GM13976 (cell line): ENCODE measurements at regions of chr3 and their contacts with region 1.

Region 1: DNA sequence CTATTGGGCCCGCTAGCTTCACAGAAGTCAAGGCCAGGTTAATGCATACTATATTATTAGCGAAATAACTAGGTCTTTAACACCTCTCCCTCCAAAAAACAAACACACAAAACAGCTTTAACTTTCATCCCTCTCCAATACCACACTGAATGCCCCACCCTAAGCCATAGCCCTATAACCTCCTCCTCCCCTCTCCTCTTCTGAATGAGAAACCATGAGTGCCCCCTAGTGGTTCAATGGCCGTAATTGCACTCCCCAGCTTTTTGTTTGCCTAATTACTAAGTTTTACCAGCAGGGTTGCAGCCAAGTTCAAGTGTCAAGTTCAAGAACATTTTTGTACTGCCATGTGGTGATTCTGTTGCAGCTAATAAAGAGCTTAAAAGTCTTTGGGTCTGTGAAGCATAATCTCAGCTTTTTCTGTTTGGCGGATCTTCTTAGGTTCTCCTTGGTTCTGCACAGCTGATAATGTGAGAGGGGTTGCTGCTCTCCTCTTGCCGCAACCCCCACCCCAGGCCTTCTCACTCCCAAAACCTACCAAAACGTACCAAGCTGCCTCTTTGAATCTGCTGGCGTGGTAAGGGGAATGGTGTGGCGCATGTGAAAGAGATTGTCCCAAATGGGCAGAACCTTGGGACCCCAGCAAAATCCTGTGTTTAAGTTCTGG is 57.9 kb downstream of the RPL22L1 start:
- DNase-seq: peak; percentile 72
- CTCF ChIP-seq: peak; percentile 88

Region 2: GRCh38 chr3:170037463-170038433 is 774.3 kb before region 1 on chr3 and contains the start of gene GPR160:
- in situ Hi-C with region 1: loop called (anchors 25 kb)
- DNase-seq: peak; percentile 87
- CTCF ChIP-seq: peak; percentile 88

Region 3: GRCh38 chr3:170180908-170181879 is 630.9 kb before region 1 on chr3 and contains the start of gene PHC3:
- in situ Hi-C with region 1: loop called (anchors 25 kb)
- DNase-seq: peak; percentile 98
- CTCF ChIP-seq: no peak

Region 4: DNA sequence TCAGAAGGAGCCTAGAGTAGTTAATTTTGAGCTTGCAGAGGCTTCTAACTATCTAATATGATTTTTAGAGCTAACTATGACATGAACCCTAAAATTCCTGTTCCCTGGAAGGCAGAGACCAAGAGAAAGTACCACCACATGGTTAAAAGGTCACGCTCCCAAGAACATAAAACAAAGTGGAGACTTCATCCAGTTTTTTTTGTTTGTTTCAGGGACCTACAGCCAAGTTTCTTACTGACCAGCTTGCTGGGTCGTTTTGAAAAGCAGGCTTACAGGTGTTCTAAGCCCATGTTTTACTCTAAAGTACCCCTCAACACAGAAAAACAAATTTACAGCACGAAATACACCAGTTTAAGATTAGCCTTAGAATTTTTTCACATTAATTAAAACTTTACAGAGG is 494.1 kb before region 1 on chr3:
- in situ Hi-C with region 1: loop called (anchors 10 kb)
- DNase-seq: no peak
- CTCF ChIP-seq: no peak

Region 5: DNA sequence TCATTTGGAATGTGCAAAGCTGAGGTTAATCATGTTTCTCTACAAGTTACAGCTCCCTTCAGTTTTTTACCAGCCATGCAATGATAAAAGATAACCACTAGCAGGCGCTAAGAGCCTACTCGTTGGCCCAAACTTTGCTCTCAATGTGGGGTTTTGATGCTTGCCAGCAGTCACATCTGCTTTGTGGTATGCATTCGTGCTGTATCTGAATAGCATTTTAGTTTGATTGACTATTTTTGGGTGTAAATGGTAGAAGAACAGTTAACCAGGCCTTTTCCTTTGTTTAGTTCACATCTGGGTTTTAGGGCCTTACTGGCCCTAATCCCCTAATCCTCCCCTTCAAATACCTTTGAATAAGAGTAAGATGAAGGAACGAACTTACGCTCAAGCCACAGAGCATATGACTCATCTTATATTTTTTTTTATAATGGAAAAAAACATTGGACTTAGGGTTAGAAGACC is 397.8 kb before region 1 on chr3:
- in situ Hi-C with region 1: loop called (anchors 5 kb)
- DNase-seq: peak; percentile 61
- CTCF ChIP-seq: peak; percentile 86